Caco-2 (cell line): ENCODE measurements at regions of chr6 and their contacts with region 1.

Region 1: DNA sequence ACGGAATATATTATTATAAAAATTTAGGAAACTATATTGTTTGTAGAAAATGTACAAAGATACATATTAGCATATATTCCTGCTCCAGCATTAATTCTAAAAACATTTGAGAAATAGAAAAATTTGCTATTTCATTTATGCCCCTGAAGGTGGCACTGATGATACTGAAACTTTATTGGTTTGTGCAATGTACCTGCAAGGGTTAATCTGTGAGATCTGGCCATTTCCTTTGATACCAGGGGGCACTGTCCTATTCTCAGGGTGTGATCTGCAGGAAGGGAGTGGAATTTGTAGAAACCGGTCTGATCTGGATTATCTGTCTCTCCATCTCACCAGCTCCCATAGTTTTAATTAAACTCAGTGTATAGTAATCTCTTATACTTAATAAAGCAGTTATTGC is 625.1 kb upstream of the IMPG1 start:
- DNase-seq: peak in 1 of 2 experiments; percentile 4
- H3K4me3 ChIP-seq: no peak overlapping the region
- H3K4me3 Mint-ChIP-seq: no peak overlapping the region
- H3K27ac Mint-ChIP-seq: no peak overlapping the region
- H3K4me1 ChIP-seq: no peaks in the 10 kb centered on the region
- H3K4me1 Mint-ChIP-seq: no peaks in the 10 kb centered on the region
- H3K27me3 ChIP-seq: no peaks in the 10 kb centered on the region
- H3K27me3 Mint-ChIP-seq: no peaks in the 10 kb centered on the region
- CTCF ChIP-seq: no peak

Region 2: DNA sequence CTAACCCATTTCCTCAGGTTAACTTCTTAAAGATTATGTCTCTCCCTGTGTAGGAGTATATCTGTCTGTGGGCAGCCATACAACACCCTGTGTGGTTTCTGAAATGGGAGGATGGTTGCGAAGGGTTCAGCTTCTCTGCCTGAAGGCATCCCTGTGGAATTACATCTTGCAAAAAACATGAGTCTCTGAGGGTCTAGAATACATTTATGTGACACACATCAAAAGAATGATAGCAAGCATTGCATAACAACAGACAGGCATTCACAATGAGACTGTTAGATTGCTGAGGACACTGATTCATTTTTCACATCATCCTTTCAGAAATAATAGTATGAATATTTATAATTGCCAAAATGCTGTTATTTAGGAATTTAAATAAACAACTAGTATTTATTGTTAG is 94.8 kb after region 1 on chr6:
- CTCF ChIA-PET with region 1: no interaction called
- POLR2A ChIA-PET with region 1: no interaction called
- intact Hi-C with region 1: loop called (anchors 10 kb)
- DNase-seq: no peak
- H3K4me3 ChIP-seq: no peak overlapping the region
- H3K4me3 Mint-ChIP-seq: no peak overlapping the region
- H3K27ac Mint-ChIP-seq: no peak overlapping the region
- H3K4me1 ChIP-seq: peaks cover 9% of the 10 kb centered on the region; the same call in 1 of the 2 replicates
- H3K4me1 Mint-ChIP-seq: peaks cover 6% of the 10 kb centered on the region
- H3K27me3 ChIP-seq: no peaks in the 10 kb centered on the region
- H3K27me3 Mint-ChIP-seq: no peaks in the 10 kb centered on the region
- CTCF ChIP-seq: no peak

Region 3: DNA sequence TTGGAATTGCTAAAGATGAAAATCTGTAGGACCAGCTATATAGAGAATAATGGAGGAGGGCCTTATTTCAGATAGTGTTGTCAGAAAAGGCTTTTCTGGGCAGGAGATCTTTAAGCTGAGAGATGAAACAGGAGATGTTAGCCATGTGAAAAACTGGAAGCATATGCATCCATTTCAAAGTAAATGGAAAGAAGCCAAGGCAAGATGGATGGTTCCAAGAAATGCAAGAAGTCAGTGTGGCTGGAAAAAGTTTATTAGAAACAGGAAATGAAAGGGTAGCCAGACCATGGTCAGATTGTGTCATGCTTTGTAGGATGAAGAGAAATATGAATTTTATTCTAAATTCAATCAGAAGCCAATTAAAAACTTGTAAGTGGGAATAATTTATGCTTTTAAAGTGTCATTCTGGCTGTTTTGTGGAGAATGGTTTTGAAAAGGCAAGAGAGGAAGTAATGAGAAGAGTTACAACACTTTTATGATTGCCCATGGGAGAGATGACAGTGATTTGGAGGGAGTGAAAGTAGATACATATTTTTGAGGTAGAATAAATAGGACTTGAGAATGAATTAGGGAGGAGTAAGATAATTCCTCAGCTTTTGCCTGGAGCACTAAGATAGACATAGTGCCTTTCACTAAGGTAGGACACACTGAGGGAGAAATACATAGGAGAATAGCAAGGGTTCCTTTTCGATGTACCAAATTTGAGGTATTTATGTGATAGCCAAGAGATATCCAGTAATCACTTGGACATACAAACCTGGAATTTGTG is 145.7 kb after region 1 on chr6:
- CTCF ChIA-PET with region 1: no interaction called
- POLR2A ChIA-PET with region 1: no interaction called
- intact Hi-C with region 1: no loop called
- DNase-seq: no peak
- H3K4me3 ChIP-seq: no peak overlapping the region
- H3K4me3 Mint-ChIP-seq: no peak overlapping the region
- H3K27ac Mint-ChIP-seq: no peak overlapping the region
- H3K4me1 ChIP-seq: no peaks in the 10 kb centered on the region
- H3K4me1 Mint-ChIP-seq: no peaks in the 10 kb centered on the region
- H3K27me3 ChIP-seq: no peaks in the 10 kb centered on the region
- H3K27me3 Mint-ChIP-seq: no peaks in the 10 kb centered on the region
- CTCF ChIP-seq: no peak

Region 4: DNA sequence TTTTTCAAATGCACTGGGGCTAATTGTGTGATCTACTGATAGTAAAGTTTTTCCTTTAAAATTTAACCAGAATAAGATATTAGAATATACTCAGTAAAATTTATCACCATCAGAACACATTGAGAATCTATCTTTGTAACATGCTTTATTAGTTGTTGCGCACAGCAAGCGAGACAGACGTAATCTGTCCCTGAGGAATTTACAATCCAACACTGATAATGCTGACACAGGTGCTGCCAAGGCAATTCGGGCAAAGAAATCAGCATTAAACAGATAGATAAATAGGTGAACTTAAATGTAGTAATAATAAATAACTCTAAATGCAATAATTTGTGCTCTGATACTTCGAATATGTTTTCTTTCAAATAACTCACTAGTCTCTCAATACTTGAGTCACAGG is 158.5 kb after region 1 on chr6:
- CTCF ChIA-PET with region 1: no interaction called
- POLR2A ChIA-PET with region 1: no interaction called
- intact Hi-C with region 1: loop called (anchors 5 kb)
- DNase-seq: no peak
- H3K4me3 ChIP-seq: no peak overlapping the region
- H3K4me3 Mint-ChIP-seq: no peak overlapping the region
- H3K27ac Mint-ChIP-seq: no peak overlapping the region
- H3K4me1 ChIP-seq: no peaks in the 10 kb centered on the region
- H3K4me1 Mint-ChIP-seq: no peaks in the 10 kb centered on the region
- H3K27me3 ChIP-seq: no peaks in the 10 kb centered on the region
- H3K27me3 Mint-ChIP-seq: no peaks in the 10 kb centered on the region
- CTCF ChIP-seq: no peak